Activated CD4-positive, alpha-beta T cell treated with anti-CD3 and anti-CD28 coated beads for 36 hours (primary cell): ENCODE measurements at regions of chr19 and their contacts with region 1.

Region 1: DNA sequence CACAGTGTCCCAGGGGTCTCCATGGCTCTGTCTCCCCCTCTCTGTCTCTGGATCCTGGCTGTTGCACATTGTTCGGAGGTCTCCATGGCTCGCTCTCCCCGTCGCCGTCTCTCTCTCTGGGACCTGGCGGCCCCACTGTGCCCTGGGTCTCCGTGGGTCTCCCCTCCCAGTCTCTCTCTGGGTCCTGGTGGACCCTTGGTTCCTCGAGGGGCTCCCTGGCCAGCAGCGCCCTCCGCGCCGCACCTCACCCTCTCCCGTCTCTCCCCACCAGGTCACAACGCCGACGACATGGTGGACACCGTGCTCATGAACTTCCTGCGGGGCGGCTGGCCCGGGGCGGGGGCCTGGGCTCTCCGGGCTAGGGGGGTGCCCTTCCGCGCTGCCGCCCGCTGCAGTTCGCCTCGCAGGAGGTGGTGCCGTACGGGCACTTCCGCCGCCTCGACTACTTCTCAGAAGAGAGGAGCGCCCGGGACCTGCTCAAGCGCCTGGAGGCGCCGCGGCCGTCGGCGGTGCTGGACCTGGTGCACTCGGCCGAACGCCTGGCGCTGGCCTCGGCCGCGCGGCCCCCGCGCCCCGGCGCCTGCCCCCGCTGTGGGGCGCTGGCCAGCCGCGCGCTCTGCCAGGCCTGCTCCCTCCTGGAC is 29.1 kb downstream of the SIGLEC5 start:
- DNase-seq: peak; percentile 28
- ATAC-seq: peak; percentile 44
- H3K4me3 Mint-ChIP-seq: no peak overlapping the region
- H3K27ac Mint-ChIP-seq: no peak overlapping the region
- H3K4me1 Mint-ChIP-seq: no peaks in the 10 kb centered on the region
- H3K27me3 Mint-ChIP-seq: peaks cover 39% of the 10 kb centered on the region

Region 2: DNA sequence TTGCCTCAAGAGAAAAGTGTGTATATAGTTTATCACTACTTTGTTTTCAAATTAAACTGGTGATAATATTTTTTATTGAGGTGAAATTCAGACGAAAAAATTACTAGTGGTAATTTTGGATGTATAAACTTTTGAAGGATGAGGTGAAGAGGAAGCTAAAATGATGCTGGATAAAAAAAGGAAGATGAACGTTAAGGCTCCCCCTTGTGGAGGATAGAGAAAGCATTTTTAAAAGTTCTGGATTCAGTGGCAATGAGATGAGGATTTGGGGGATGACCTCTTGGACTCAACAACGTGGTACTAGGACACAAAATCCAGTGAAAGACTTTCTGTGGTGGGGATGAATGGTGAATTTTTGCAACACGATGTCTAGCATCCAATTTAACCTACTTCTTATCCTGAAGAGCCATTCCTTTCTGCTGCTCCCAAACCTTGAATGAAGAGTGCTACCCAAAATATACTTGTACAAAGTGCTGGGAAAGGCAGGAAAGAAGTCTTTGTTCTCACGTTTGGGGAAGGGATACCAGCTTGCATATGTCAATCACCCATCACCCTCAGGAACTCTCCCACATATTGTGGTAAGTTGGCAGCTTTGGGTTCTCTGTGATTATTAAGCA is 36.4 kb after region 1 on chr19:
- CTCF ChIA-PET with region 1: interaction called, 3 read pairs
- POLR2A ChIA-PET with region 1: no interaction called
- intact Hi-C with region 1: loop called in 1 of 2 experiments (anchors 5 kb)
- DNase-seq: no peak
- ATAC-seq: no peak
- H3K4me3 Mint-ChIP-seq: no peak overlapping the region
- H3K27ac Mint-ChIP-seq: no peak overlapping the region
- H3K4me1 Mint-ChIP-seq: no peaks in the 10 kb centered on the region
- H3K27me3 Mint-ChIP-seq: peaks cover 29% of the 10 kb centered on the region